ENCODE measurements at regions of chr11 and their contacts with region 1.

Region 1: GRCh38 chr11:60913793-60914632 is at the start of gene TMEM109:
- DNase-seq: peak; percentile 95
- ATAC-seq: peak; percentile 56
- H3K4me3 ChIP-seq: peak within 1 kb of the TSS; percentile 61 to 100 (median 90)
- H3K4me3 Mint-ChIP-seq: peak within 1 kb of the TSS; percentile 97
- H3K27ac ChIP-seq: peak within 1 kb of the TSS; percentile 87 to 96
- H3K27ac Mint-ChIP-seq: peak within 1 kb of the TSS; percentile 98
- H3K4me1 ChIP-seq: peaks cover 68 to 87% of the 10 kb centered on the region in 2 donors
- H3K4me1 Mint-ChIP-seq: peaks cover 77% of the 10 kb centered on the region
- H3K27me3 ChIP-seq: no peaks in the 10 kb centered on the region
- H3K27me3 Mint-ChIP-seq: no peaks in the 10 kb centered on the region
- CTCF ChIP-seq: no peak
- total RNA-seq, gene TMEM109: 81.7 and 99.4 TPM in 2 replicates

Region 2: GRCh38 chr11:60818057-60818456 is 96.0 kb before region 1 on chr11:
- CTCF ChIA-PET with region 1: no interaction called
- POLR2A ChIA-PET with region 1: no interaction called
- intact Hi-C with region 1: no loop called
- DNase-seq: no peak
- ATAC-seq: no peak
- H3K4me3 ChIP-seq: no peak overlapping the region
- H3K4me3 Mint-ChIP-seq: no peak overlapping the region
- H3K27ac ChIP-seq: no peak overlapping the region
- H3K27ac Mint-ChIP-seq: no peak overlapping the region
- H3K4me1 ChIP-seq: no peaks in the 10 kb centered on the region
- H3K4me1 Mint-ChIP-seq: no peaks in the 10 kb centered on the region
- H3K27me3 ChIP-seq: peaks cover 0 to 3% (median 0%) of the 10 kb centered on the region in 4 experiments
- H3K27me3 Mint-ChIP-seq: peaks cover 5% of the 10 kb centered on the region
- CTCF ChIP-seq: no peak

Region 3: GRCh38 chr11:60831143-60831500 is 82.9 kb before region 1 on chr11:
- CTCF ChIA-PET with region 1: interaction called, 11 read pairs
- POLR2A ChIA-PET with region 1: interaction called, 3 read pairs
- intact Hi-C with region 1: no loop called
- DNase-seq: peak; percentile 85
- ATAC-seq: peak; percentile 86
- H3K4me3 ChIP-seq: peak overlapping the region in 1 of 5 experiments; percentile 3
- H3K4me3 Mint-ChIP-seq: no peak overlapping the region
- H3K27ac ChIP-seq: no peak overlapping the region
- H3K27ac Mint-ChIP-seq: no peak overlapping the region
- H3K4me1 ChIP-seq: peaks cover 0 to 5% of the 10 kb centered on the region in 2 donors
- H3K4me1 Mint-ChIP-seq: peaks cover 5% of the 10 kb centered on the region
- H3K27me3 ChIP-seq: peaks cover 0 to 8% (median 0%) of the 10 kb centered on the region in 4 experiments
- H3K27me3 Mint-ChIP-seq: peaks cover 20% of the 10 kb centered on the region
- CTCF ChIP-seq: peak; percentile 96

Region 4: GRCh38 chr11:60932605-60933356 is 18.8 kb after region 1 on chr11:
- CTCF ChIA-PET with region 1: interaction called, 55 read pairs
- POLR2A ChIA-PET with region 1: interaction called, 96 read pairs
- intact Hi-C with region 1: loop called (anchors 1 kb)
- DNase-seq: peak; percentile 80
- ATAC-seq: peak; percentile 52
- H3K4me3 ChIP-seq: peak overlapping the region in 1 of 5 experiments; percentile 56
- H3K4me3 Mint-ChIP-seq: peak overlapping the region; percentile 74
- H3K27ac ChIP-seq: peak overlapping the region; percentile 72 to 90
- H3K27ac Mint-ChIP-seq: peak overlapping the region; percentile 91
- H3K4me1 ChIP-seq: peaks cover 26 to 44% of the 10 kb centered on the region in 2 donors
- H3K4me1 Mint-ChIP-seq: peaks cover 46% of the 10 kb centered on the region
- H3K27me3 ChIP-seq: no peaks in the 10 kb centered on the region
- H3K27me3 Mint-ChIP-seq: no peaks in the 10 kb centered on the region
- CTCF ChIP-seq: no peak

Region 5: DNA sequence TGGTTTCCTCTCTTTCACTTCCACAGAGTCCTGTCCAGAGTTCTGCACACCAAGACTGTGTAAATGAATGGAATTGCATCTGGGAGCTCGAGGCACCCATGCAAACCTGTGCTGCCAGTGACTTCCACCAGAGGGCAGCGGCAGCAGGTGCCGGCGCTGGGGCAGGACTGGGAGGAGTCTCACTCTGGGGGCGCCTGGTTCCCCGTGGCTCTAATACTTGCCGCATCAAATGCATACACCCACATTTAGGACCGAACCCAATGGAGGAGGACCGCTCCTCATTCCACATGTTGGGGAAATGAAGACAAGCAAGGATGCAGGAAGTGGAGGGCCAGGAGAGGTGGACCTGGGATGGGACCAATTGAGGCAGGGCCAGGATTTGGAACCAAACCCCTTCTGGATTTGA is 56.4 kb after region 1 on chr11:
- CTCF ChIA-PET with region 1: interaction called, 4 read pairs
- POLR2A ChIA-PET with region 1: interaction called, 10 read pairs
- intact Hi-C with region 1: loop called (anchors 1 kb)
- DNase-seq: peak; percentile 83
- ATAC-seq: peak; percentile 91
- H3K4me3 ChIP-seq: peak overlapping the region in 1 of 5 experiments; percentile 5
- H3K4me3 Mint-ChIP-seq: peak overlapping the region; percentile 79
- H3K27ac ChIP-seq: no peak overlapping the region
- H3K27ac Mint-ChIP-seq: peak overlapping the region; percentile 71
- H3K4me1 ChIP-seq: peaks cover 27 to 32% of the 10 kb centered on the region in 2 donors
- H3K4me1 Mint-ChIP-seq: peaks cover 34% of the 10 kb centered on the region
- H3K27me3 ChIP-seq: no peaks in the 10 kb centered on the region
- H3K27me3 Mint-ChIP-seq: no peaks in the 10 kb centered on the region
- CTCF ChIP-seq: peak; percentile 94

Region 6: DNA sequence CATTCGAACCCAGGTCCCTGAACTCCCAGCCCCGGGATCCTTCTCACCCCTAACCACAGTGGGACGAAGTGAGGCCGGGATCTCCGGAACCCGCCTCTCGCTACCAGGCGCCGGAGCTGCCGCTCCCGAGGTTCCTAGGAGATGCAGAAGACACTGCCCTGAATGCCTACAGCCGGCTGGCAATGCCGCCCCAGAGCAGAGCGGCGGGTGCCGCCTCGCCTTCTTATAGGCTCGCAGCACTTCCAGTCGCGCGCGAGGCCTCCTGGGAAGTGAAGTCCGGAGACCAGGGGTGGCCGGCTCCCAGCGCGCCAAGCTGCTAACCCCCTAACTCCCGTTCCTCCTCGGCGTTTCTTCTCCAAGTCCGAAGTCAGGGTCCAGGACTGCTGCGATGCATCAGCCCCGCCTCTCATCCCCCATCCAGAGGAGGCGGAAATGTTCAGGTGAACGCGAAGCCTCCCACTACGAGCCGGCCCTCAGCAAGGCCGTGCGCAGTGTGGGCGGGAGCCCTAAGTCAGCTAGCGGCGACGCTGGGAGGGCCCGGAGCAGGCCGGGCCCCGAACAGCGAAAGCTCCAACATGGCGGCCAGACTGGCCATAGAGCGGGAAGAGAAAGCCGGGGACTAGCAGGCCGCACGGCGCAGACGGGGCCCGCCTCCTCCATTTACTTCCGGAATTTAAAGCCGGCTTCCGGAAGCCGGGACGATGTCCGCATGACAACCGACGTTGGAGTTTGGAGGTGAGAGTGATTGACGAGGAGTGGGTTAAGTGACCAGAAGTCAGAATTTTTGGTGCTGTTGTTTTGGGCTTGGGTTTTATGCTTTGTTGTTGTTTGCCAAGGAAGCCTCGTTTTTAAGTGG is 447.9 kb after region 1 on chr11 and contains the starts of genes CYB561A3 and TMEM138:
- CTCF ChIA-PET with region 1: interaction called, 3 read pairs
- POLR2A ChIA-PET with region 1: no interaction called
- intact Hi-C with region 1: loop called (anchors 10 kb)
- DNase-seq: peak; percentile 94
- ATAC-seq: peak; percentile 72
- H3K4me3 ChIP-seq: peak within 1 kb of the TSS; percentile 86 to 99 (median 97)
- H3K4me3 Mint-ChIP-seq: peak within 1 kb of the TSS; percentile 99
- H3K27ac ChIP-seq: peak within 1 kb of the TSS; percentile 93
- H3K27ac Mint-ChIP-seq: peak within 1 kb of the TSS; percentile 98
- H3K4me1 ChIP-seq: peaks cover 44 to 50% of the 10 kb centered on the region in 2 donors
- H3K4me1 Mint-ChIP-seq: peaks cover 53% of the 10 kb centered on the region
- H3K27me3 ChIP-seq: no peaks in the 10 kb centered on the region
- H3K27me3 Mint-ChIP-seq: no peaks in the 10 kb centered on the region
- CTCF ChIP-seq: no peak
- total RNA-seq, gene CYB561A3: 248 and 259 TPM in 2 replicates
- total RNA-seq, gene TMEM138: 84.3 and 85.3 TPM in 2 replicates

Measured in B cell (primary cell).